ENCODE measurements at regions of chr1 and their contacts with region 1.

Region 1: DNA sequence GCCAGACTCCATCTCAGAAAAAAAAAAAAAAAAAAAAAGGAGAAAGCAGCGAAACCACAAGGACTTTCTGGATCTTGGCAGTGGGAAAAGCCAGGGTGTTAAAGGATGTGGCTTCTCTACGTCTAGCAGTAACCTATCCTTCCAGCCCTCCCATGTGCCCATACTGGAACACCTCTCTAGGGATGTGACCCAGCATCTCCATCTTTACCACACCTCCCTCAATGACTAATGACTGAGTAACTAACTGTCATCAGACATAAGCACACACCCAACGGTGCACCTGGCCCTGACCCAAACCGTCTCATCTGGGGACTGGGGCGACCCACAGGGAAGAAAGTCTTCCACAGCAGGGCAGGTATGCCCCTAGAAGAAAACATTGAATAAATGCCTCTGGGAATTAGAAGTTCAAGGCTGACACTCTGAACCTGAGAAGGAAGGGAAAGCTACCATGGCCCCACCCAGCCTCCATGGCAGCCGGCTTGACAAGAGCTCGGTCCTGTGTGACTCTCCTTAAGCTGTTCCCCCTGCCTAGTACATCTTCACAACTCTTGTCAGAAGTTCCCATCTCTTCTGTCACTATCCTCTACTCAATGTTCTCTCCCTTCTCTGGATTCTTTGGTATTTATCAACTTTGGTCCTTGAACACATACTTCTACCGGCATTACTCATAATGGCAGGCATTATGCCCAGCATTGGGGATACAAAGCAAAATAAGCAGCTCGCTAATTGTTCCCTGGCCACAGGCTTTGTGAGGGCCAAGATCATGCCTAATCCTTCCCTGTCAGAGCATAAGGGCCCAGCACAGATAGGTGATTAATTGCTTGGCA is 14.8 kb upstream of the PAQR6 start:
- DNase-seq: peak; percentile 90
- H3K4me3 Mint-ChIP-seq: peak overlapping the region; percentile 13
- H3K27ac Mint-ChIP-seq: peak overlapping the region; percentile 92
- H3K4me1 Mint-ChIP-seq: peaks cover 40% of the 10 kb centered on the region
- H3K27me3 Mint-ChIP-seq: no peaks in the 10 kb centered on the region
- CTCF ChIP-seq: no peak

Region 2: DNA sequence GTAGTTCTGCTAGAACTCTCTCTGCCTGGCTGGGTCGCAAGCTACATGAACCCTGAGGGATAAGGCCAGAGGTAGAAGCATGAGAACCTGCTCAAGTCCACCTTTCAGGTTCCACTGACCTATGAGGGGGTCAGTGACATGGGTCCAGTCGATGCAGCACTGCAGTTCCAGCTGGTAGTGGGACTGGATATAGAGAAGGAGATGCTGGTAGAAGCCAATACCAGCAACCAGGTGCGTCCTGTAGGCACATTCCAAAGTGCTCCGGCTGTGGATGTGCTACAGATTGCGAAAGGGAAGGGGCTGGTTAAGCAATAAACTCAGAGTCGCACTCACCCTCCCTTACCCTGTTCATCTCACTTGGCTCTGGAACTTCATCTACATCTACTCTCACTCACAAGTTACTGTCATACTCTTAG is 14.3 kb after region 1 on chr1:
- CTCF ChIA-PET with region 1: interaction called, 6 read pairs
- POLR2A ChIA-PET with region 1: interaction called, 45 read pairs
- intact Hi-C with region 1: loop called (anchors 1 kb)
- DNase-seq: peak; percentile 88
- H3K4me3 Mint-ChIP-seq: no peak overlapping the region
- H3K27ac Mint-ChIP-seq: peak overlapping the region; percentile 36
- H3K4me1 Mint-ChIP-seq: peaks cover 32% of the 10 kb centered on the region
- H3K27me3 Mint-ChIP-seq: no peaks in the 10 kb centered on the region
- CTCF ChIP-seq: no peak

Region 3: GRCh38 chr1:156303241-156303640 is 40.6 kb after region 1 on chr1:
- CTCF ChIA-PET with region 1: interaction called, 5 read pairs
- POLR2A ChIA-PET with region 1: interaction called, 12 read pairs
- intact Hi-C with region 1: no loop called
- DNase-seq: no peak
- H3K4me3 Mint-ChIP-seq: no peak overlapping the region
- H3K27ac Mint-ChIP-seq: no peak overlapping the region
- H3K4me1 Mint-ChIP-seq: peaks cover 11% of the 10 kb centered on the region
- H3K27me3 Mint-ChIP-seq: no peaks in the 10 kb centered on the region
- CTCF ChIP-seq: no peak

Region 4: GRCh38 chr1:156383023-156383422 is 120.3 kb after region 1 on chr1:
- CTCF ChIA-PET with region 1: no interaction called
- POLR2A ChIA-PET with region 1: no interaction called
- intact Hi-C with region 1: no loop called
- DNase-seq: peak; percentile 80
- H3K4me3 Mint-ChIP-seq: no peak overlapping the region
- H3K27ac Mint-ChIP-seq: no peak overlapping the region
- H3K4me1 Mint-ChIP-seq: peaks cover 11% of the 10 kb centered on the region
- H3K27me3 Mint-ChIP-seq: no peaks in the 10 kb centered on the region
- CTCF ChIP-seq: peak; percentile 94

Measured in MCF 10A (cell line).